Naive thymus-derived CD4-positive, alpha-beta T cell (primary cell): ENCODE measurements at regions of chr17 and their contacts with region 1.

Region 1: DNA sequence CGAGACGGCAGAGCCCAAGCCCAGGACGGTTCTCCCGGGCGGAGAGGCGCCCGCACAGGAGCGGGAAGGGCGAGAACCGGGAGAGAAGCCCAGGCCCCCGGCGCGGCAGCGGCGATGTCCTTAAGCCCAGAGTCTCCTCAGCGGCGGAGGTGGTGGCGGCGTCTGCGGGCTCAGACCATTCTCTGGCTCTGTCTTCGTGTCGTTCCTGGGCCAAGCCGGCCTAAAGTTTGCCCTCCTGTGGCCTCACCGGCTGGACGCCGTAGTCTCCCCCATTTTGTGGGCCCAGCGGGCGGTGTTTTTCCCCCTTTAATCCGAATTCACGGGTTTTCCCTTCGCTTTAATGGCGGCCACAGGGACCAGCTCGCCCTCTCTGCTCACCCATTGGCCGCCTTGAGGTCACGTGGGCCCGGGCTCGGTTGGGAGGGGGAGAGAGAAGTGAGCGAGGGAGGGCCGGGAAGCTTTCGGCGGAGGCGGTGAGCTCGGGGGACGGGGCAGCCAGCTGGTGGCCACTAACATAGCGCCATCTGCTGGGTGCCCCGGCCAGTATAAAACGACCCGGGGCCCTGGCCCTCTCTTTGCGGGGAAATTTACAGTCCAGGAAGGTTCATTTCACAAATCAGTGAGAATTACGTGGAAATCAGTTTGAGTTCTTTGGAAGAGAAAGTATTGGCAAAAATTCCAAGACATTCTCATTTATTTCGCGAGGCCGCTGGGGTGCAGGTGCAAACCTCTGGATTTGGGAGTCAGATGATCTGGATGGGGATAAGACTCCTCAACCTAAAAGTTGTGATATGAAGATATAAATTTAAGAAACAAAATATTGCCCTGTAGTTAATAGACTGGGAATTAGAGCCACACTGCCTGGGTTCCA is 755 bp upstream of the MED13 start:
- DNase-seq: peak; percentile 91 to 97 (median 96)
- ATAC-seq: peak; percentile 97
- H3K4me3 ChIP-seq: peak overlapping the region; percentile 88
- H3K4me3 Mint-ChIP-seq: peak overlapping the region; percentile 93 to 99 (median 96)
- H3K27ac ChIP-seq: peak overlapping the region; percentile 100
- H3K27ac Mint-ChIP-seq: peak overlapping the region; percentile 92 to 100 (median 96)
- H3K4me1 ChIP-seq: peaks cover 16 to 23% of the 10 kb centered on the region in 2 donors
- H3K4me1 Mint-ChIP-seq: peaks cover 24 to 40% (median 34%) of the 10 kb centered on the region in 7 donors
- H3K27me3 ChIP-seq: no peaks in the 10 kb centered on the region
- H3K27me3 Mint-ChIP-seq: no peaks in the 10 kb centered on the region

Region 2: GRCh38 chr17:60525685-60526514 is 1539.9 kb before region 1 on chr17 and contains the start of gene APPBP2:
- CTCF ChIA-PET with region 1: no interaction called
- POLR2A ChIA-PET with region 1: no interaction called
- intact Hi-C with region 1: loop called in 1 of 2 experiments (anchors 5 kb)
- DNase-seq: peak; percentile 59 to 80 (median 77)
- ATAC-seq: peak; percentile 92
- H3K4me3 ChIP-seq: peak within 1 kb of the TSS; percentile 86
- H3K4me3 Mint-ChIP-seq: peak within 1 kb of the TSS; percentile 98 to 100 (median 99)
- H3K27ac ChIP-seq: peak within 1 kb of the TSS; percentile 99
- H3K27ac Mint-ChIP-seq: peak within 1 kb of the TSS; percentile 96 to 99 (median 98)
- H3K4me1 ChIP-seq: peaks cover 19 to 25% of the 10 kb centered on the region in 2 donors
- H3K4me1 Mint-ChIP-seq: peaks cover 31 to 63% (median 55%) of the 10 kb centered on the region in 7 donors
- H3K27me3 ChIP-seq: no peaks in the 10 kb centered on the region
- H3K27me3 Mint-ChIP-seq: no peaks in the 10 kb centered on the region
- total RNA-seq, gene APPBP2: 24.2 to 47.5 (median 33.0) TPM

Region 3: GRCh38 chr17:61635913-61636432 is 429.9 kb before region 1 on chr17:
- CTCF ChIA-PET with region 1: no interaction called
- POLR2A ChIA-PET with region 1: no interaction called
- intact Hi-C with region 1: loop called in 1 of 2 experiments (anchors 1 kb)
- DNase-seq: peak in 7 of 9 donors; percentile 2 to 40 (median 9)
- ATAC-seq: peak; percentile 60
- H3K4me3 ChIP-seq: no peak overlapping the region
- H3K4me3 Mint-ChIP-seq: no peak overlapping the region
- H3K27ac ChIP-seq: no peak overlapping the region
- H3K27ac Mint-ChIP-seq: no peak overlapping the region
- H3K4me1 ChIP-seq: no peaks in the 10 kb centered on the region
- H3K4me1 Mint-ChIP-seq: no peaks in the 10 kb centered on the region
- H3K27me3 ChIP-seq: peaks cover 0 to 3% of the 10 kb centered on the region in 2 donors
- H3K27me3 Mint-ChIP-seq: peaks cover 56 to 82% (median 72%) of the 10 kb centered on the region in 5 donors

Region 4: DNA sequence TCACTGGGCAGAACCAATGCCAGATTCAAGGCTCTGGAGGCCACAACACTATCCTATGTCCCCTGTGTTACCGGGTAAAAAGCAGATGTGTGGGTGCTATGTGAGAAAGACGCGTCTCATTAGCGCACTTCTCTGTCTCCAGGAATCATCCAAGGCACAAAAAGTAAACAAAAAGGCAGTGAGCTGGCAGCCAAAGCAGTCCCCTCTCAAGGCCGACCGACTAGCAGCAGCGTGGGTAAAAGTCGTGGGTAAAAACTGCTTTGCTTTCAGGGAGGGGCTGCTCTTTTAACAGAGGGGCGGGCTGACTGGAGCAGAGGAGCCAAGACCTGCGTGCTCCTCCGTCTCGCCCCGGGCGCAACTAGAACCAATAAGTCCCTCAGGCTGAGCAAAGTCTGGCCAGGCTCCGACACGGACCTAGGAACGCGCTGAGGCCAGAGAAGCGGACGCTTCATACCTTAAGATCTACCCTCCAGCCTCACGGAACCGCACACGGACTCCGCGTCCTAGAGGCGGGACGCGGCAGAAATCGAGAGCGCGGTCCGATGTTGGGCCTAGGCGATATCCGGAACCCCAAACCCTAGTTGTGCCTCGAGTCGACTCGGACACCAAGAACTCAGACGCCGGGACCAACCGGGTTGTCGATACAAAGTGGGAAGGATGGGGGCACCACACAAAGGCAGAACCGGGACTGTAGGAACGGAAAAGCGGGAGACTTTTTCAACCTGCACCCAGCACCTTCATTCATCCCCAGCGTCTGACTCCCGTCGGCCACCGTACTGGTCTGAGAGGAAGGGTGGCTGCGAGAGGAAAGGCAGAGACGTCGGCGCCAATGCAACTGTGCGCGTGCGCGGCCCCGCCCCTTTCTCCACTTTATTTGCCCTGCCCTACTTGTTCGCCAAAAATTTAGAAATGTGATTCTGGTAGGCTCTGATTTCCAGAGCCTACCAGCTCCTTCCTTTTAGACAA is 138.3 kb before region 1 on chr17 and contains the start of gene INTS2:
- CTCF ChIA-PET with region 1: interaction called, 4 read pairs
- POLR2A ChIA-PET with region 1: interaction called, 4 read pairs
- intact Hi-C with region 1: loop called (anchors 1 kb)
- DNase-seq: peak; percentile 90 to 96 (median 94)
- ATAC-seq: peak; percentile 95
- H3K4me3 ChIP-seq: peak within 1 kb of the TSS; percentile 98
- H3K4me3 Mint-ChIP-seq: peak within 1 kb of the TSS; percentile 88 to 96 (median 92)
- H3K27ac ChIP-seq: peak within 1 kb of the TSS; percentile 80
- H3K27ac Mint-ChIP-seq: peak within 1 kb of the TSS; percentile 90 to 98 (median 94)
- H3K4me1 ChIP-seq: peaks cover 11 to 19% of the 10 kb centered on the region in 2 donors
- H3K4me1 Mint-ChIP-seq: peaks cover 13 to 28% (median 21%) of the 10 kb centered on the region in 7 donors
- H3K27me3 ChIP-seq: no peaks in the 10 kb centered on the region
- H3K27me3 Mint-ChIP-seq: peaks cover 0 to 3% (median 0%) of the 10 kb centered on the region in 5 donors
- total RNA-seq, gene INTS2: 14.9 to 24.4 (median 19.2) TPM

Region 5: GRCh38 chr17:62478433-62478879 is 412.6 kb after region 1 on chr17 and contains the start of gene TLK2:
- CTCF ChIA-PET with region 1: interaction called, 5 read pairs
- POLR2A ChIA-PET with region 1: no interaction called
- intact Hi-C with region 1: loop called in 1 of 2 experiments (anchors 2 kb)
- DNase-seq: peak in 7 of 9 donors; percentile 61 to 84 (median 74)
- ATAC-seq: peak; percentile 88
- H3K4me3 ChIP-seq: peak within 1 kb of the TSS; percentile 53
- H3K4me3 Mint-ChIP-seq: peak within 1 kb of the TSS; percentile 87 to 95 (median 92)
- H3K27ac ChIP-seq: peak within 1 kb of the TSS; percentile 90
- H3K27ac Mint-ChIP-seq: peak within 1 kb of the TSS; percentile 90 to 98 (median 94)
- H3K4me1 ChIP-seq: peaks cover 5 to 8% of the 10 kb centered on the region in 2 donors
- H3K4me1 Mint-ChIP-seq: peaks cover 22 to 48% (median 40%) of the 10 kb centered on the region in 7 donors
- H3K27me3 ChIP-seq: no peaks in the 10 kb centered on the region
- H3K27me3 Mint-ChIP-seq: no peaks in the 10 kb centered on the region
- total RNA-seq, gene TLK2: 48.1 to 84.8 (median 68.6) TPM